Activated CD8-positive, alpha-beta memory T cell treated with anti-CD3 and anti-CD28 coated beads, Interleukin-2, amount 10 ng/mL, durations not matched to agents 7 days and 5 days (primary cell): ENCODE measurements at regions of chr19 and their contacts with region 1.

Region 1: GRCh38 chr19:35066691-35067563 is 25.4 kb downstream of the HPN start:
- DNase-seq: peak; percentile 90
- ATAC-seq: peak; percentile 92
- H3K4me3 Mint-ChIP-seq: no peak overlapping the region
- H3K27ac Mint-ChIP-seq: peak overlapping the region; percentile 22
- H3K4me1 Mint-ChIP-seq: peaks cover 8% of the 10 kb centered on the region
- H3K27me3 Mint-ChIP-seq: peaks cover 10% of the 10 kb centered on the region

Region 2: DNA sequence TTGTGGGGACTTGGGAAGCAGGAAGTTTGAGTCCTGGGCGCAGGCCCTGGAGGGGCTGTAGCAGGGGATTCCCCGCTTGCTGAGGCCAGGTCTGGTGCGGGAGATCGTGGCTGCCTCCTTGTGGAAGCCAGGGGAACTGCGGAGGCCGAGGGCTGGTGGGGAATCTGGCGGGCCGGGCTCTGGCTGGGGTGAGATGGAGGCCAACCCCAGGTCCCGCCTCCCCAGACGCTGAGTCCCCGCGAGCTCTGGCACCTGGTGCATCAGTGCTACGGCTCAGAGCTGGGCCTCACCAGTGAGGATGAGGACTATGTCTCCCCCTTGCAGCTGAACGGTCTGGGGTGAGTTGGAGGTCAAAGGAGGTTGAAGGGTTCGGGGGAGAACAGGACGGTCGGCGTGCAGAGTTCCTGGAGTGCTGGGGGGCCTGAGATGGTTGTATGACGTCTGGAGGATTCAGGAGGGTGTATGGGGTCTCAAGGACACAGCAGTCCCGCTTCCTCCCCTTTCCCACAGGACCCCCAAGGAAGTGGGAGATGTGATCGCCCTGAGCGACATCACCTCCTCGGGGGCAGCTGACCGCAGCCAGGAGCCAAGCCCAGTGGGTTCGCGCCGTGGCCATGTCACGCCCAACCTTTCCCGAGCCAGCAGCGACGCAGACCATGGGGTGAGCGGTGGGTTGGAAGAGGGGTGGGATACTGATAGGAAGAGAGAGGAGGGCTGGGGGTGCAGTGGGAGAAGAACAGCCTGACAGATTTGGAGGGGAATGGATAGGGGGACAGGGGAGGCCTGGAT is 53.7 kb before region 1 on chr19:
- CTCF ChIA-PET with region 1: no interaction called
- DNase-seq: peak; percentile 83
- ATAC-seq: peak; percentile 67
- H3K4me3 Mint-ChIP-seq: no peak overlapping the region
- H3K27ac Mint-ChIP-seq: peak overlapping the region; percentile 56
- H3K4me1 Mint-ChIP-seq: peaks cover 52% of the 10 kb centered on the region
- H3K27me3 Mint-ChIP-seq: no peaks in the 10 kb centered on the region

Region 3: DNA sequence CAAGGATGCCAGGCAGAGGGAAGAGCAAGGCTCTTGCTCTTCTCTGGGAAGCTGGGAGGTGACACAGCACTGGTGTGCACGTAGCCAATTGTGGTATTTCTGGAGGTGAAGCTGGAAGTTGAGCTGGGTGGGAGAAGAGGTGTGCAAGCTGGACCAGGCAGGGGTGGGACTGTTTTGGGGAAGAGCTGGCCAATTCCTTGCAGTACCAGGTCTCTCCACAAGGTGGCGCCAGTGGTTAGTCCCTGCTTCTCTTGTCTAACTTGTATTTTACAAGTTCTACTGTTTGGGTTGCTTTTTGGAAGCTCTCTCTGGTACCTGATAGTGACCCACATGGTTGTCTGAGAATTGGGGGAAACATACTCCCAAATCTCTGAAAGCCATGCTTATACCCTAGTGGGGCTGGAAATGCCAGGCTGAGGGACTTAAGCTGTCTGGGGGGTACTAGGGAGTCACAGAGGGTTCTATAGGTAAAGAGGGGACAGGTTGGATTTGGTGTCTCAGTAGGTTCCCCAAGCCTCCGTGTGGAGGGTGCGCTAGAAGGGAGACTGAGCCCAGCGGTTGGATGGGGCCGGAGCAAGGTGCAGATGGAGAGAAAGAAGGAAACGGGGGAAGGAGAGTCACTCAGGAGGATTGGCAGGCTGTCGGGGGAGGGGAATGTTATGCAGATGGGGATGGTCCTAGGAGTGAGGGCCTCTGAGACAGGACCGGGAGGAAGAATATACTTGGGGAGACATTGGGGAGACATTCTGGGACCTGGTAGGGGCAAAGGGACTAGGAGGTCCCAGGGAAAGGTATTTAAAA is 22.4 kb before region 1 on chr19:
- CTCF ChIA-PET with region 1: interaction called, 16 read pairs
- DNase-seq: peak; percentile 66
- ATAC-seq: no peak
- H3K4me3 Mint-ChIP-seq: no peak overlapping the region
- H3K27ac Mint-ChIP-seq: no peak overlapping the region
- H3K4me1 Mint-ChIP-seq: peaks cover 17% of the 10 kb centered on the region
- H3K27me3 Mint-ChIP-seq: peaks cover 10% of the 10 kb centered on the region

Region 4: GRCh38 chr19:35055715-35056179 is 11.2 kb before region 1 on chr19:
- CTCF ChIA-PET with region 1: interaction called, 11 read pairs
- DNase-seq: no peak
- ATAC-seq: no peak
- H3K4me3 Mint-ChIP-seq: no peak overlapping the region
- H3K27ac Mint-ChIP-seq: no peak overlapping the region
- H3K4me1 Mint-ChIP-seq: no peaks in the 10 kb centered on the region
- H3K27me3 Mint-ChIP-seq: peaks cover 8% of the 10 kb centered on the region

Region 5: GRCh38 chr19:35085947-35086346 is 19.0 kb after region 1 on chr19:
- CTCF ChIA-PET with region 1: interaction called, 13 read pairs
- DNase-seq: no peak
- ATAC-seq: no peak
- H3K4me3 Mint-ChIP-seq: no peak overlapping the region
- H3K27ac Mint-ChIP-seq: peak overlapping the region; percentile 37
- H3K4me1 Mint-ChIP-seq: peaks cover 4% of the 10 kb centered on the region
- H3K27me3 Mint-ChIP-seq: peaks cover 3% of the 10 kb centered on the region